BJ (cell line): ENCODE measurements at regions of chr5 and their contacts with region 1.

Region 1: DNA sequence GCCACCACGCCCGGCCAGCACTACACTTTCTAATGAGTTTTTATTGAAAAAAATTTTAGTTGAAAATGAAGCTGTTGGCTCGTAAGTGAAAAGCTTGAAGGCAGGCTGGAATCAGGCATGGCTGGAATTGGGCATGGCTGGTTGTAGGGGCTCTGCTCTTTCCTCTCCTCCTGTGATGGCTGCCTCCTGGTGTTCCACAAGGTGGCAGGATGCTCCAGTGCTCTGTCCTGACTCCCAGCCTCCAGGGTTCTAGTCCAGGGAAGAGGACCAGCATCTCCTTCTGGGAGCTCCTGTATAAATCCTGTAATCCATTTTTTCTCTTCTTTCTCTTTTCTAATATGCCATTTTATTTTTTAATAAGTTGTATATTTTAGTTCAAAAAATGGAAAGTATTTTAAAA is 57.2 kb upstream of the DHFR start:
- DNase-seq: no peak
- H3K4me3 ChIP-seq: no peak overlapping the region
- H3K27me3 ChIP-seq: no peaks in the 10 kb centered on the region
- CTCF ChIP-seq: peak; percentile 62

Region 2: DNA sequence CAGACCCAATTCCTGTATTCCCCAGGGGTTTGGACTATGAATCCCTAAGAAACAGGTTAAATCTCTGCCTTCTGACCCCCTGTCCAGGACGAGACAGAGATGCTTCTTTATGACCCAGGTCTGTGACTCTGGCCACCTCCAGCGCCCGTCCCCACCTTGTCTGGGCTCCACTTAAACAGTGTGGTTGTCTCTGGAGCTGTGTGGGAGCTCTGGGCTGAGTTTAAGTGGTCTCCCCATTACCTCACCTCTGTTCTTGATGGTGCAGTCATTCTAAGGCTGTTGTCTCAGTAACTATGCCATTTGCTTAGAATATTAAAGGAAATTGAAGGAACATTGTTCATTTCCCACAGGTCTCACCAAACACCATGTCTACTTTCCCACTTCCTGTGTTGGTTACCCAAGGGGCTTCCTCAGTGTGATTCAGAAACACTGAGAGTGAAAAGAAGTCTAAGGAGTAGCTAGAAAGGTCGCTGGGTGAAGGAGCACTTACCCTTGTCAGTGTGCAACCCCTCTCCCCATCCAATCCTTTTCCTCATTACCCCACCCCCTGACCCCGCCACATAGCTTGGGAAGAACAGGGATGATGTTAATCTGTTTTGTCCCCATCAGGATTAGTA is 393.4 kb after region 1 on chr5:
- CTCF ChIA-PET with region 1: interaction called, 14 read pairs
- POLR2A ChIA-PET with region 1: no interaction called
- DNase-seq: no peak
- H3K4me3 ChIP-seq: no peak overlapping the region
- H3K27me3 ChIP-seq: no peaks in the 10 kb centered on the region
- CTCF ChIP-seq: no peak